ENCODE measurements at regions of chr6 and their contacts with region 1.

Region 1: GRCh38 chr6:4319981-4320683 is 184.8 kb upstream of the ECI2 start:
- DNase-seq: peak; percentile 83
- ATAC-seq: peak; percentile 40
- H3K4me3 ChIP-seq: peak overlapping the region; percentile 20; the same call in 1 of the 2 replicates
- H3K27ac ChIP-seq: peak overlapping the region; percentile 94
- H3K4me1 ChIP-seq: peaks cover 60% of the 10 kb centered on the region
- H3K27me3 ChIP-seq: no peaks in the 10 kb centered on the region
- CTCF ChIP-seq: no peak

Region 2: GRCh38 chr6:3956054-3956453 is 364.1 kb before region 1 on chr6:
- CTCF ChIA-PET with region 1: no interaction called
- POLR2A ChIA-PET with region 1: no interaction called
- intact Hi-C with region 1: no loop called
- DNase-seq: peak; percentile 60
- ATAC-seq: peak; percentile 46; the same call in 1 of the 2 replicates
- H3K4me3 ChIP-seq: no peak overlapping the region
- H3K27ac ChIP-seq: no peak overlapping the region
- H3K4me1 ChIP-seq: 0 out of 2 replicates have a peak, but pooled peaks cover 3% of the 10 kb centered on the region
- H3K27me3 ChIP-seq: no peaks in the 10 kb centered on the region
- CTCF ChIP-seq: no peak

Region 3: DNA sequence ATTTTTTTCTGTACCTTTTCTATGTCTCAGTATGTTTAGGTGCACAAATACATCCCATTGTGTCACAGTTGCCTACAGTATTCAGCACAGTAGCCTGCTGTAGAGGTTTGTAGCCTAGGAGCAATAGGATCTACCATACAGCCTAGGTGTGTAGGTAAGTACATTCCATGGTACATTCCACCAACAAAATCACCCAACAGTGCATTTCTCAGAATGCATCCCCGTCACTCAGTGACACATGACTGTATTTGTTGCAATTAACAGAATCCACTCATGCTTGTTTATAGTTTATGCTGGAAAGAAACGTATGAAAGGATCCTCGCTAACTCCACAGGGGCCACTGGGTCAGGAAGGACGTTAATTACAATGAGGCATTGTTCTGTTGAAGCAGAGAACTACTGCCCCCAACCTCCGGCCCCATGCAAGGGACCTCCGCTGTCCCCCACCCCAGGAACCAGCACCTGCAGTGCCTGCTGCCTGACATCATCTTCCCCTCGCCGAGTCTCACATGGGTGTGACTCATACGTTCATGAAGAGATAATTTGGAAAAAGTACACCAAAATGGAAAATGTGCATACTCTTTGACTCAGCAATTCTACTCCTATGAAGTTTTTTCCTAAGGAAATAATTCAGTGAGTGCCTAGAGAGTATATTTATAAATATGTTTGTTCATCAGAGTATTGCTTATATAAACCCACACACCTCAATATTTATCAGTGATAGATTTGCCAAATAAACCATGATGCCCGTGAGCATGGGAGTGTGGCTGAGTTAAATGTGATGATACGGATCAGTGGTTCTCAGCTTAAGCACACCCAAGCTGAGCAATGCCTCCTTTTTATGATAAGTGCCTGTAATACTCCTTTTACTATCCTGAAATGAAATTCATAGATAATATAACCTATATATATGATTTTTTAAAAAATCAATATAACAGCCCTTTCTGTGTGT is 28.4 kb before region 1 on chr6:
- CTCF ChIA-PET with region 1: no interaction called
- POLR2A ChIA-PET with region 1: no interaction called
- intact Hi-C with region 1: no loop called
- DNase-seq: peak; percentile 34
- ATAC-seq: peak; percentile 57
- H3K4me3 ChIP-seq: no peak overlapping the region
- H3K27ac ChIP-seq: no peak overlapping the region
- H3K4me1 ChIP-seq: 0 out of 2 replicates have a peak, but pooled peaks cover 10% of the 10 kb centered on the region
- H3K27me3 ChIP-seq: no peaks in the 10 kb centered on the region
- CTCF ChIP-seq: no peak

Region 4: DNA sequence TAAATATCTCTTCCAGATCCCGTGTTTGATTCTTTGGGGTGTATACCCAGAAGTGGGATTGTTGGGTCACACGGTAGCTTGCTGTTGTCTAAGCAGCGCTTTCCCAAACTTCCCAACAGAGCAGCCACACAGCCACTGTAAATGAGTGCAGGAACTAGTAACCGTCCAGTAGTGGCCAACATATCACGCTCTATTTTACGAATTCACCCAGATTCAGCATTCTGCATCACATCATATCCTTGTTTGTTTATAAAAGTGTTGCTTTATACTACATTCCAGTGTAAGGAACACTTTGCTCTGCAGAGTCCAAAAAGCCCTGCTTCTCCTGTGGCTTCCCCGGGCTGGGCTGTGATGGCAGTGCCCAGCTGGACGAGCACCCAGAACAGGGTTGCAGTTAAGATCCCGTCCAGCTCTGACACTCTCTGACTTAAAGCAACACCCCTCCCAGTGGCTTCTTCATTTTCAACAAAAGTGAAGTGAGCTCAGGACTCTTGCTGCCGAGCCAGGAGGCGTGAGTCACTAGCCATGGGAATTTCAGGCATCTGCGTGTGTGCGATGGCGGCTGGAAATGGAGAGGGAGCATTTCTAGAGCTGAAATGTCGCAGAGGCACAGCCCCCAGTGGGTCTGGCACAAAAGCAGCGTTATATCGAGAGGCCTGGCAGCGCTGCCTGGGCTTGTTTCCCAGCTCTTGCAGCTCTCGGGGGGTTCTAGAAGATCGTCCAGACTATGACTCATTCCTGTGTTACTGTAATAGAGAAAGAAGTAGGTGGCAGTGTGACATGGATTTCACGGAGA is 31.6 kb after region 1 on chr6:
- CTCF ChIA-PET with region 1: no interaction called
- POLR2A ChIA-PET with region 1: interaction called, 10 read pairs
- intact Hi-C with region 1: loop called (anchors 2 kb)
- DNase-seq: peak; percentile 88
- ATAC-seq: peak; percentile 84
- H3K4me3 ChIP-seq: peak overlapping the region; percentile 61
- H3K27ac ChIP-seq: peak overlapping the region; percentile 81
- H3K4me1 ChIP-seq: peaks cover 39% of the 10 kb centered on the region
- H3K27me3 ChIP-seq: no peaks in the 10 kb centered on the region
- CTCF ChIP-seq: peak; percentile 29; the same call in 1 of the 2 replicates

Region 5: DNA sequence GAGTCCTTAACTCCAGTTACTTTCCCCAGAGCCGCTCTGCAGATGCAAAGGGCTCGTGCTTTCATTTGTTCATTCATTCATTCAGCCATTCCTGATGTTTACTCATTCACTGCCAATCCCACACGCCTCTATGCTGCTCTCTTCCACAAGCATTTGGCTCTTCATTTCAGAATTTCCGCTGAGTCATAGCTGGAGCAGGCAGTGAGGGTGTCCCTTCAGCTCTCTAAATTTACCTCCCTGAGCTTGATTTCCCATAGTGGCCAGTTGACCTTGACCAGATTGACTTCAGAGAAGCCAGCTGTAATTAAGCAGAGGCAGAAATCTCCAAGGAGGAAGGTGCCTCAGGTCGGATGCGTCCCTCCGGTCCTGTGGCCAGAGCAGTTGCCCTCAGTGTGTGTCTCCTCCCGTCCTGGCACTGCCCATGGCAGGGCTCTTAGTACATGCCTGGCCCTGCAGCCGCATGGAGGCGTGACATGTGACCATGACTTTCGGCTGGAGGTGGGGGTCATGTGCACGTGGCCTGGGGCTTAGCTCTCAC is 82.4 kb after region 1 on chr6:
- CTCF ChIA-PET with region 1: interaction called, 4 read pairs
- POLR2A ChIA-PET with region 1: no interaction called
- intact Hi-C with region 1: loop called (anchors 1 kb)
- DNase-seq: peak; percentile 93
- ATAC-seq: peak; percentile 91
- H3K4me3 ChIP-seq: no peak overlapping the region
- H3K27ac ChIP-seq: peak overlapping the region; percentile 92
- H3K4me1 ChIP-seq: peaks cover 26% of the 10 kb centered on the region
- H3K27me3 ChIP-seq: no peaks in the 10 kb centered on the region
- CTCF ChIP-seq: no peak

Region 6: GRCh38 chr6:4466261-4466660 is 146.1 kb after region 1 on chr6:
- CTCF ChIA-PET with region 1: no interaction called
- POLR2A ChIA-PET with region 1: no interaction called
- intact Hi-C with region 1: loop called (anchors 2 kb)
- DNase-seq: peak; percentile 82
- ATAC-seq: peak; percentile 93
- H3K4me3 ChIP-seq: peak overlapping the region; percentile 11; the same call in 1 of the 2 replicates
- H3K27ac ChIP-seq: peak overlapping the region; percentile 59
- H3K4me1 ChIP-seq: peaks cover 23% of the 10 kb centered on the region
- H3K27me3 ChIP-seq: no peaks in the 10 kb centered on the region
- CTCF ChIP-seq: no peak

Region 7: DNA sequence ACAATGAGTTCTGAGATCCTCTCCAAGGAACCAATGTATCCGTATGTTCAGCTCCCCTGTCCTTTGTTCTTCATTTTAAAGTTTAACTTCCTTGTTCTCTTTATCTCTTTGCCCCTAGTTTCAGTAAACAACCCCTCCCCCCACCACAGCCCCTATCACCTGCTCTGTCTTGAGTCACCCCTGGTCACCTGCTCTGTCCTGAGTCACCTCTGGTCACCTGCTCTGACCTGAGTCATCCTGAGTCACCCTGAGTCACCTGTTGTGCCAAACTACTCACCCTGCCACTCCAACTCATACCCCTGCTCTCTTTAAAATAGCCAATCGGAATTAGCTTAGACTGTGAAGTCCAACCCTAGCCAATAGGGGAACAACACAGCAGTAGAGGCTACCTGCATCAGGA is 167.4 kb after region 1 on chr6:
- CTCF ChIA-PET with region 1: no interaction called
- POLR2A ChIA-PET with region 1: no interaction called
- intact Hi-C with region 1: loop called (anchors 1 kb)
- DNase-seq: peak; percentile 92
- ATAC-seq: peak; percentile 89
- H3K4me3 ChIP-seq: no peak overlapping the region
- H3K27ac ChIP-seq: peak overlapping the region; percentile 48
- H3K4me1 ChIP-seq: no peaks in the 10 kb centered on the region
- H3K27me3 ChIP-seq: no peaks in the 10 kb centered on the region
- CTCF ChIP-seq: no peak

Region 8: GRCh38 chr6:4603291-4603690 is 283.2 kb after region 1 on chr6:
- CTCF ChIA-PET with region 1: no interaction called
- POLR2A ChIA-PET with region 1: interaction called, 11 read pairs
- intact Hi-C with region 1: loop called (anchors 1 kb)
- DNase-seq: peak; percentile 53
- ATAC-seq: no peak
- H3K4me3 ChIP-seq: no peak overlapping the region
- H3K27ac ChIP-seq: no peak overlapping the region
- H3K4me1 ChIP-seq: peaks cover 54% of the 10 kb centered on the region
- H3K27me3 ChIP-seq: no peaks in the 10 kb centered on the region
- CTCF ChIP-seq: no peak

Measured in PC-3 (cell line).